Right ventricle myocardium inferior (tissue), 1 donor: ENCODE measurements at regions of chr17 and their contacts with region 1.

Region 1: GRCh38 chr17:49707608-49708514 is at the start of gene SLC35B1:
- DNase-seq: peak; percentile 100
- ATAC-seq: peak; percentile 99
- total RNA-seq, gene SLC35B1: 59.3 TPM

Region 2: GRCh38 chr17:49434821-49435670 is 272.8 kb before region 1 on chr17:
- intact Hi-C with region 1: loop called (anchors 10 kb)
- DNase-seq: no peak
- ATAC-seq: no peak

Region 3: GRCh38 chr17:49763735-49764558 is 56.1 kb after region 1 on chr17 and contains the start of gene FAM117A:
- intact Hi-C with region 1: loop called (anchors 5 kb)
- DNase-seq: peak; percentile 95
- ATAC-seq: peak; percentile 98
- total RNA-seq, gene FAM117A: 10.3 TPM

Region 4: GRCh38 chr17:49779739-49780231 is 71.9 kb after region 1 on chr17:
- intact Hi-C with region 1: loop called (anchors 2 kb)
- DNase-seq: no peak
- ATAC-seq: peak; percentile 45

Region 5: GRCh38 chr17:49845321-49845720 is 137.5 kb after region 1 on chr17:
- intact Hi-C with region 1: loop called (anchors 5 kb)
- DNase-seq: peak; percentile 71
- ATAC-seq: peak; percentile 88

Region 6: GRCh38 chr17:49997791-49998703 is 290.2 kb after region 1 on chr17:
- intact Hi-C with region 1: loop called (anchors 5 kb)
- DNase-seq: no peak
- ATAC-seq: peak; percentile 80

Region 7: GRCh38 chr17:50737118-50737698 is 1029.3 kb after region 1 on chr17:
- intact Hi-C with region 1: no loop called
- DNase-seq: no peak
- ATAC-seq: no peak